ENCODE measurements at regions of chr15 and their contacts with region 1.

Region 1: GRCh38 chr15:74635228-74635627 is 19.6 kb downstream of the CLK3 start:
- H3K4me3 ChIP-seq: no peak overlapping the region
- H3K27ac ChIP-seq: no peak overlapping the region
- H3K4me1 ChIP-seq: no peaks in the 10 kb centered on the region
- CTCF ChIP-seq: peak; percentile 94

Region 2: GRCh38 chr15:74373731-74374647 is 261.2 kb before region 1 on chr15:
- CTCF ChIA-PET with region 1: interaction called, 100 read pairs
- POLR2A ChIA-PET with region 1: no interaction called
- H3K4me3 ChIP-seq: peak overlapping the region; percentile 45
- H3K27ac ChIP-seq: peak overlapping the region; percentile 54; the same call in 1 of the 2 replicates
- H3K4me1 ChIP-seq: peaks cover 9% of the 10 kb centered on the region
- CTCF ChIP-seq: peak; percentile 98

Region 3: DNA sequence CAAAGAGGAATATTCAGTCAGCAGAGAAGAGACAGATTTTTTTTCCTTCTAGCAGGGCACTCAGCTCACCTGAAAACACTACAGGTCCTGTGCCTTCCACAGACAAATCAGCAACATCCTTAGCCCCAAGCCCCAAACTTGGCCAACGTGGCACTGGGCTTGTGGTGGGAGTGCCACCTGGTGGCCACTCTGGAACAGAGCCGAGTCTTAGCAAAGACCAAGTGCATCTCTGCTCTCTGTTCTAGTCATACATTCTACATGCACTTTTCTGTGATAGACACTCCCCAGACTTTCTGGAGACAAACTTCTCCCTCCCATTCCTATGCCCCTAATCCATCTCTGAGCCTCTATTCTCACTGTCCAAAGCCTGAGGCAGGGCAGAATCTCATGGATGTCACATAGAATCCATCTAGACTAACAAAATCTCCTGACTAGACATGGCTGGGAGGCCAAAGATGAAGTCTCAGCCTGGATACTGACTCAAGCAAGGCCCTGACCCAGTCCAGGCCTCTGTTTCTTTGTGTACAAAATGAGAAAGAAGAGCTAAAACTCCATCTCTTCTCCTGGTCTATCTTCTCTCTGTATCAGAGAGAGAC is 196.4 kb before region 1 on chr15:
- CTCF ChIA-PET with region 1: interaction called, 10 read pairs
- POLR2A ChIA-PET with region 1: interaction called, 5 read pairs
- H3K4me3 ChIP-seq: no peak overlapping the region
- H3K27ac ChIP-seq: no peak overlapping the region
- H3K4me1 ChIP-seq: peaks cover 4% of the 10 kb centered on the region
- CTCF ChIP-seq: peak; percentile 93

Region 4: DNA sequence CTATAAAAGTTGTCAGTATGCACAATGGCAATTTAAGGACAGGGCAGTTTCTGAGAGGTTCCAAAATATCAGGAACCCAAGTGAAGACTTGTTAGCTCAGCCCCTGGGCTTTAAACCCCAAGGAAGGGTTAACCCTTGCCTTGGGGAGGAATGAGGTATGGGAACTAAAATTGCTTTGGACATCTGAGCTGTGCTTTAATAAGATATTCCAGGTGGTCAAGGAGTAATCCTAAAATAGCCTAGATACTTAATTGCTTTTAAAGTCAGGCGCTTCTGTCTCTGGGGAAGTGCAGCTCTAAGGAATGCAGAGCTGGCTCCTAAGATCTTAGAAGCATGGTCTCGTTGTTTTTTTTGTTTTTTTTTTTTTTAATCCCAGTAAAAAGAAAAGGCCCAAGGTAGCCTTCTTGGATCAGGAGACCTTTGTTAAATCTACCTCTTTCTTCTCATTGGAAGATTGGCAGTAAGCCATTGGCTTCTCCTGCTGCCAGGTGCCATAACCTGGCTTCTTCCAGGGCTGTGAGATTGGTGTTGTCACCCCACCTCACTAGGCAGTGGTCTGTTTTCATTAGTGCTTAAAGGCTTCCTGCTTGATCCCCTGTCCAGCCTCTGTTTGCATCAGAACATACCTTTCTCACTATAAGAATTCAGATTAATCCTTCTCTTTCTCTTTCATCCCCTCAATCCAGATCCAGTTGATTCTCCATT is 69.7 kb before region 1 on chr15:
- CTCF ChIA-PET with region 1: no interaction called
- POLR2A ChIA-PET with region 1: no interaction called
- H3K4me3 ChIP-seq: no peak overlapping the region
- H3K27ac ChIP-seq: no peak overlapping the region
- H3K4me1 ChIP-seq: peaks cover 3% of the 10 kb centered on the region; the same call in 1 of the 2 replicates
- CTCF ChIP-seq: no peak

Region 5: GRCh38 chr15:74653426-74654123 is 18.3 kb after region 1 on chr15:
- CTCF ChIA-PET with region 1: interaction called, 200 read pairs
- POLR2A ChIA-PET with region 1: no interaction called
- H3K4me3 ChIP-seq: no peak overlapping the region
- H3K27ac ChIP-seq: no peak overlapping the region
- H3K4me1 ChIP-seq: peaks cover 16% of the 10 kb centered on the region
- CTCF ChIP-seq: no peak

Region 6: DNA sequence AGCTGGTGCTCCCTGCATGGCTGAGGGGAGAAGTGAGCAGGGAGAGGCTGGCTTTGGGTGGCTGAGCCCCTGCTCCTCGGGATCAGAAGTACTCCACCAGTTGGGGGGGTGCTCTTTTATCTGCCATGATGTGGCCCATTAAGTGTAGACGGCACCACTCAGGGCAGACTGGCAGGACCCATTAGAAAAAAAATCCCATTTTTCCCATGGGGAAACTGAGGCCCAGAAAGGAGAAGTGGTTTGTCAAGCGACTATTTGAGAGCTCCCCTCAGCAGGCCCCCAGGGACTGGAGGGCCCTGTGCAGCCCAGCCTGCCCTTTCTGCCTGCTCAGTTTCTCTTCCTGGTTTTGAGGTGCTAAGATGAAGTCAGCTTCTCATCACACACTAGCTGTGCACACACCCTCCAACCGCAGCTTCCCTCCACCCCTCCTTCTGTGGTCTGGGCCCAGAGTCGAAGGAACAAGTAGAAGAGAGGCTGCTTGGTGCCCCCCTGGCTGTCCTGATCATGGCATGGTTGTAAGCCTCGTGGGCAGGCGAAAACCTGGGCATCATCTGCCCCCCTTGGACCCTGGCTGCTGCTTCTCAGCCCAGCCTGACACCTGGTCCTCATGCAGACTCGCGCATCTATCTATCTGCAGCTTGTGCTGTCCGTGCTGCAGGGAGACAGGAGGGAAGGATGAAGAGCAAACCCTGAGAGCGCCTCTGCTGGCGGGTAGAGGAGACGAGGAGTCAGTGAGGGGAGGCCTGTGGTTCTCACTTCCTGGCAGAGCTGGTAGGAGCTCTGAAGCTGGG is 152.2 kb after region 1 on chr15:
- CTCF ChIA-PET with region 1: interaction called, 19 read pairs
- POLR2A ChIA-PET with region 1: no interaction called
- H3K4me3 ChIP-seq: no peak overlapping the region
- H3K27ac ChIP-seq: no peak overlapping the region
- H3K4me1 ChIP-seq: peaks cover 59% of the 10 kb centered on the region
- CTCF ChIP-seq: peak; percentile 89